Lower leg skin (tissue), 4 donors: ENCODE measurements at regions of chr3 and their contacts with region 1.

Region 1: GRCh38 chr3:64595253-64595694 is 92.5 kb downstream of the ADAMTS9 start:
- DNase-seq: peak in 1 of 2 donors; percentile 56
- H3K4me3 ChIP-seq: no peak overlapping the region
- CTCF ChIP-seq: no peak
- POLR2A ChIP-seq: no peak

Region 2: GRCh38 chr3:64187065-64187959 is 408.0 kb before region 1 on chr3:
- intact Hi-C with region 1: no loop called
- DNase-seq: peak; percentile 58 to 89
- H3K4me3 ChIP-seq: no peak overlapping the region
- CTCF ChIP-seq: no peak
- POLR2A ChIP-seq: no peak

Region 3: DNA sequence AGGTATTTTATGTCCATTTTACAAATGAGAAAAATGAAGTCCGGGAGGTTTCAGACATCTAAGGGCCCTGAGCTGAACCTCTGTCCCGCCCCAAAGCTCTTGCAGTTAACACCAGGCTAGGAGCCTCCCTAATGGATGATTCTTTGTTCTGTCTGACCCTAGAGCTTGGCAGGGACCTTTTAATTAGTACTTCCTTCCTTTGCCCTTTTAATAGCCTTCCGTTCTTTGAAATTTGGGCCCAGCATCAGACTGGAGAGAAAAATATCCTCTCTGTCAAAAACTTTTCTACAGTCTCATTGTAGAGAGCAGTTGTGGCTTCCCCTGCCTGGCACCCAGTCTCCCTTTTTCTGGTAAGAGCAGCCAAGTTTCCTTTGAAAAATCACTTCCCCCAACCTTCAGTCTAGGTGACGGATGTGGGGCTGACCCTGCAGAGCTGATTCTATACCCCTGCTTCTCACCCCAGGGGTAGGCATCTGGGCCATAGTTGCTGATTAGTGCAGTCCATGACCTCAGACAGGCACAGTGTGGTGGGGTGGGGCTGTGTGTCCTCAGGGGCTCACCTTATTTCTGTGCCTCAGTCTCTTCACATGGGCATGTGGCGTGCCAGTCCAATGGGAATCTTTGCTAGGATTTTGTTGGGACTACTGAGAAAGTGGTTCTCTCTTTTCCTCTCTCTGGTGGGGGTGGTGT is 127.9 kb before region 1 on chr3:
- intact Hi-C with region 1: no loop called
- DNase-seq: no peak
- H3K4me3 ChIP-seq: no peak overlapping the region
- CTCF ChIP-seq: no peak
- POLR2A ChIP-seq: no peak

Region 4: GRCh38 chr3:66236281-66236680 is 1641.0 kb after region 1 on chr3:
- intact Hi-C with region 1: loop called (anchors 5 kb)
- DNase-seq: no peak
- H3K4me3 ChIP-seq: no peak overlapping the region
- CTCF ChIP-seq: no peak
- POLR2A ChIP-seq: no peak